ENCODE measurements at regions of chr5 and their contacts with region 1.

Region 1: DNA sequence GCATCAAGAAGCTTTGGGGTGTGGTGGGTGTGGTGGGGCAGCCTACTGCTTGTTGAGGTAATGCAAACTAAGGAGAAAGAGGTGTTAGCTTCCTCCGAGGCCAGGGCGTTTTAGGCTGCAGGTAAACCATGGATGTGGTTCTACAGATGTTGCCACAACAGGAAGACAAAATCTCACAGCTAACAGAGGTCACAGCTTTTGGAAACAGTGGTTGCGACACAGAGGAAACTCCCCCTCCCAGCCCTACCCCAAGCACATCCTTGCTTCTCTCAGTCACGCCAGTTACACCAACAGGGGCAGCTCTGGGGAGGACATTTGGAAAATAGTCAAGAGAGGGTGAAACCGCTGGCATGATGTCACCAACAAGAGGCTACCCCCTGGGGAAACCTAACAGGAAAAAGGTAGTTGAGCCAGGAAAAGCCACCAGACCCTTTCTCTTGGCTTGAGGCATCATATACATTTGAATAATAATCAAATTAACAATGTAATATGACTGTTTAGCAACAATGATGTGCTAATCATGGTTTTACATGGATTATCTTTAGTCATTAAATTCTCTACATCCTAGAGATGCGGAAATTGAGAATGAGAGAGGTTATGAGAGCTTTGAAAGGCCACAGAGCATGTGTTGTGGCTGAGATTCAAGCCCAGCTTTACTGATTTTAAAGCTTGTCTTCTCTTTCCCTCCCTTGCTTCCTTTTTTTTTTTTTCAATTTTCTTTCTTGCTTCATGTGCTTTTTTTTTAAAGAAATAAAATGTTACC is 82.2 kb upstream of the IL12B start:
- DNase-seq: peak; percentile 81
- H3K4me3 Mint-ChIP-seq: peak overlapping the region; percentile 47
- H3K27ac Mint-ChIP-seq: peak overlapping the region; percentile 80
- H3K4me1 Mint-ChIP-seq: peaks cover 64% of the 10 kb centered on the region
- H3K27me3 Mint-ChIP-seq: peaks cover 13% of the 10 kb centered on the region

Region 2: GRCh38 chr5:158819840-158820620 is 592.4 kb before region 1 on chr5:
- intact Hi-C with region 1: loop called (anchors 5 kb)
- DNase-seq: no peak
- H3K4me3 Mint-ChIP-seq: no peak overlapping the region
- H3K27ac Mint-ChIP-seq: peak overlapping the region; percentile 80
- H3K4me1 Mint-ChIP-seq: peaks cover 55% of the 10 kb centered on the region
- H3K27me3 Mint-ChIP-seq: no peaks in the 10 kb centered on the region

Region 3: DNA sequence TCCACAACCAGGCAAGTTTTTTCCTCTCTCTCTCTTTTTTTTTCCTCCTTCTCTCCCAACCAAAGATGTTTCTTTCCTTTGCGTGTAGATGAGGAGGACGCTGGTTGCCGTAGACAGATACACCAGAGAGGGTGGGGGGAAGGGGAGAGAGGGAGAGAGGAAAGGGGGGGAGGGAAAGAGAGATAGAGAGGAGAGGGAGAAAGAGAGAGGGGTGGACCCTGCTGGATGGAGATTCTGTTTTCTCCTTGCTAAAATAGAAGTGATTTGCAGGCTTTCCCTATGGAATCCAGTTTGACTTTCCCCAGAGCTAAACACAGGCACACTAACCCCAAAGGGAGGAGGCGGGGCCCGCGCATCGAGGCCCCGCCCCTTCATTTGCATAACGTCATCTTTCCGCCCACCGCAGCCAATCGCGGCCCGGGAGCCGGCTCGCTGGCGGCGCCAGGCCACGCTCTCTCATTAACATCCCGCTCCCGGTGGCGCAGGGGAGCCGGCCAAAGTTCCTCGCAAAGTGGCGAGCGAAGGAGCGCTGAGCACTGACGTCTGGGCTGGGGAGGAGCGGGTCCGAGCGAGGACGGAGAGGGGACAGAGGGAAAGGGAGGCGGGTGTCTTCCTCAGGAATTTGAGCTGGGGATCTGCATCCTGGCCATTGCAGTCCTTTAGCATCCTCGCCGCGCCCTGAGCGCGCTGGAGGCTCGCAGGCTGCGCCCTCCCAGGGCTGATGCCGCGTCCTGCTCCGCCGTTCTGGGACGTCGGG is 312.3 kb before region 1 on chr5:
- intact Hi-C with region 1: loop called (anchors 5 kb)
- DNase-seq: peak; percentile 84
- H3K4me3 Mint-ChIP-seq: peak overlapping the region; percentile 86
- H3K27ac Mint-ChIP-seq: peak overlapping the region; percentile 51
- H3K4me1 Mint-ChIP-seq: peaks cover 34% of the 10 kb centered on the region
- H3K27me3 Mint-ChIP-seq: peaks cover 80% of the 10 kb centered on the region

Region 4: GRCh38 chr5:159262859-159263567 is 149.5 kb before region 1 on chr5 and contains the start of gene UBLCP1:
- intact Hi-C with region 1: loop called (anchors 1 kb)
- DNase-seq: peak; percentile 71
- H3K4me3 Mint-ChIP-seq: peak within 1 kb of the TSS; percentile 96
- H3K27ac Mint-ChIP-seq: peak within 1 kb of the TSS; percentile 98
- H3K4me1 Mint-ChIP-seq: peaks cover 21% of the 10 kb centered on the region
- H3K27me3 Mint-ChIP-seq: peaks cover 2% of the 10 kb centered on the region
- total RNA-seq, gene UBLCP1: 30.8 and 32.3 TPM in 2 replicates

Region 5: DNA sequence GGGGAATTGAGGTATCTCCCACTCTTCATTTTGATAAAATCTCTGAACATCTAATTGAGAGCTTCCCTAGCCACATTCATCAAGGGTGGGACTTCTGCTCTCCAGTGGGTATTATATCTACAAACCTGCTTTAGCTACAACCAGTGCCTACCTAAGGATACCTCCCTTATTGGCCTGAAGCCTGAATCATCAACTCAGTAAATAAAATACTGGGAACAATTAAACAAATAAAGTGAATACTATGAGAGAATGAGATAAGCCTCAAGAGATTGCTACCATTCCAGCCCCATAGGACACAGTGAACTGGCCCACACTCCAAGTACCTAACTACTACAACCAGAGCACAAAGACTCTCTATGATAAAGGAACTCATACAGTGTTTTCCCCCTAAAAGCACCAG is 34.8 kb before region 1 on chr5:
- intact Hi-C with region 1: no loop called
- DNase-seq: no peak
- H3K4me3 Mint-ChIP-seq: no peak overlapping the region
- H3K27ac Mint-ChIP-seq: no peak overlapping the region
- H3K4me1 Mint-ChIP-seq: no peaks in the 10 kb centered on the region
- H3K27me3 Mint-ChIP-seq: peaks cover 19% of the 10 kb centered on the region

Region 6: GRCh38 chr5:159427180-159428012 is 14.9 kb after region 1 on chr5:
- intact Hi-C with region 1: loop called (anchors 1 kb)
- DNase-seq: no peak
- H3K4me3 Mint-ChIP-seq: no peak overlapping the region
- H3K27ac Mint-ChIP-seq: peak overlapping the region; percentile 13
- H3K4me1 Mint-ChIP-seq: peaks cover 66% of the 10 kb centered on the region
- H3K27me3 Mint-ChIP-seq: peaks cover 3% of the 10 kb centered on the region

Region 7: GRCh38 chr5:160119142-160119904 is 706.9 kb after region 1 on chr5 and contains the start of gene PWWP2A:
- intact Hi-C with region 1: loop called (anchors 5 kb)
- DNase-seq: peak; percentile 96
- H3K4me3 Mint-ChIP-seq: peak within 1 kb of the TSS; percentile 95
- H3K27ac Mint-ChIP-seq: peak within 1 kb of the TSS; percentile 96
- H3K4me1 Mint-ChIP-seq: peaks cover 15% of the 10 kb centered on the region
- H3K27me3 Mint-ChIP-seq: peaks cover 4% of the 10 kb centered on the region
- total RNA-seq, gene PWWP2A: 29.7 and 30.2 TPM in 2 replicates